Esophagus muscularis mucosa (tissue), 4 donors: ENCODE measurements at regions of chr2 and their contacts with region 1.

Region 1: DNA sequence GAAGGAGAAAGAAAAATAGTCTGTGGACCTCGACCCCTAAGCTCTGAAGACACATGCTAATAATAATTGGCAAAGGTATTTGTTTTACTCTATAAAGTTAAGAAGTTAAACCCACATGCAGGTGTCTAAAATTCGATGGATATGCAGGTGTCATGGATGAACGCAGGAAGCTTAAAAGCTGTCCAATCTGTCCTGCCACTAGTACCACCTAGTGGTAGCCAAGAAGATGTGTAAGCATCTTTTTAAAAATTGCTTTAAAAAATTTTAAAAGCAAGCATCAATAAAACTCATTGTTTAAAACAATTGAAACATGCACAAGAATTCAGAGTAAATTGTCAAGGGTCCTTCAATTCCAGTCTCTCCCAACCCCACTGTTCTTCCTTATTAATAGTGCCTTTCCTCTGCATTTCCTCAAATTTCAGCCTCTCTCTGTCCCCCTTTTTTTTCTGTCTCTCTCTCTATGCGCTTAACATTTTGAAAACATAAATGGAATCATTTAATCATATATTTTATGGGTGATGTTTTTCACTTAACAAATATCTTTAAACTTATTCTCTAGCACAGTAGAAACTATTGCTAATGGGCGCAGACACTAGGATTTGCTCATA is 30.6 kb upstream of the PPP3R1 start:
- DNase-seq: no peak
- H3K4me3 ChIP-seq: no peak overlapping the region
- H3K27ac ChIP-seq: no peak overlapping the region
- H3K4me1 ChIP-seq: peaks cover 11 to 31% (median 15%) of the 10 kb centered on the region in 4 donors
- H3K27me3 ChIP-seq: no peaks in the 10 kb centered on the region
- CTCF ChIP-seq: peak; percentile 71 to 76 (median 72)
- EP300 ChIP-seq: no peak
- POLR2A ChIP-seq: no peak

Region 2: DNA sequence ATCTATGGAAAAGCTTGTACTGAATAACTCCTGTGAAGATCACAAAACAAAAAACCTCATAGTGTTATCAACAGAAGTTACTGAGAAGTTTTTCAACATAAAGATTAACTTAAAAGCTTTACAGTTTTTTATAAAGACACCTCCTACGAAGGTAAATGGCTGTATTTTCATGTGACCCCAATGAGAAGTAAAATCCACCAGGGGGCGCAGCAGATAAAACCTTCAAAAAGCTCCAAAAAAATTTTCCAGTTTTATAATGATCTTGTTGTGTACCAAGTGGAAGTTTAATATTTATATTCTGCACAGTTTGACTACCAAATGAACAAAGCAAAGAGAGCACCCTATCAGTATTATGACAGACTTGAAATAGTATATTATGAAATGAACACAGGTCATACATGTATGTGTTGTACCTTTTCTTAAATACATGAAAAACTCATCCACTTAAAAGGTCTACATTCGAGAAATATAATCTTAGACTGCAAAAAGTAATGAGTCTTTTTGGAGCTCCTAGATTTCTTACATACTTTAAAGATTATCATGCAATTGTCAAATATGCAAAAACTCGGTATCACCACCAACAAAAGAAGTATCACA is 86.7 kb before region 1 on chr2:
- intact Hi-C with region 1: loop called (anchors 5 kb)
- DNase-seq: no peak
- H3K4me3 ChIP-seq: no peak overlapping the region
- H3K27ac ChIP-seq: peak overlapping the region in 1 of 4 donors; percentile 37
- H3K4me1 ChIP-seq: peaks cover 23 to 65% (median 46%) of the 10 kb centered on the region in 4 donors
- H3K27me3 ChIP-seq: no peaks in the 10 kb centered on the region
- CTCF ChIP-seq: peak in 2 of 3 experiments; percentile 73 to 75
- EP300 ChIP-seq: no peak
- POLR2A ChIP-seq: no peak